ENCODE measurements at regions of chr2 and their contacts with region 1.

Region 1: GRCh38 chr2:179936654-179937053 is 70.4 kb downstream of the CWC22 start:
- DNase-seq: peak; percentile 57 to 77
- H3K4me3 ChIP-seq: no peak overlapping the region
- H3K4me3 Mint-ChIP-seq: no peak overlapping the region
- H3K27ac Mint-ChIP-seq: no peak overlapping the region
- H3K4me1 ChIP-seq: no peaks in the 10 kb centered on the region
- H3K4me1 Mint-ChIP-seq: no peaks in the 10 kb centered on the region
- H3K27me3 ChIP-seq: no peaks in the 10 kb centered on the region
- H3K27me3 Mint-ChIP-seq: no peaks in the 10 kb centered on the region
- CTCF ChIP-seq: peak; percentile 71

Region 2: GRCh38 chr2:179410552-179411356 is 525.9 kb before region 1 on chr2:
- CTCF ChIA-PET with region 1: no interaction called
- POLR2A ChIA-PET with region 1: no interaction called
- intact Hi-C with region 1: loop called (anchors 5 kb)
- DNase-seq: peak; percentile 54 to 68
- H3K4me3 ChIP-seq: no peak overlapping the region
- H3K4me3 Mint-ChIP-seq: no peak overlapping the region
- H3K27ac Mint-ChIP-seq: no peak overlapping the region
- H3K4me1 ChIP-seq: no peaks in the 10 kb centered on the region
- H3K4me1 Mint-ChIP-seq: no peaks in the 10 kb centered on the region
- H3K27me3 ChIP-seq: no peaks in the 10 kb centered on the region
- H3K27me3 Mint-ChIP-seq: no peaks in the 10 kb centered on the region
- CTCF ChIP-seq: peak; percentile 78 to 84

Region 3: DNA sequence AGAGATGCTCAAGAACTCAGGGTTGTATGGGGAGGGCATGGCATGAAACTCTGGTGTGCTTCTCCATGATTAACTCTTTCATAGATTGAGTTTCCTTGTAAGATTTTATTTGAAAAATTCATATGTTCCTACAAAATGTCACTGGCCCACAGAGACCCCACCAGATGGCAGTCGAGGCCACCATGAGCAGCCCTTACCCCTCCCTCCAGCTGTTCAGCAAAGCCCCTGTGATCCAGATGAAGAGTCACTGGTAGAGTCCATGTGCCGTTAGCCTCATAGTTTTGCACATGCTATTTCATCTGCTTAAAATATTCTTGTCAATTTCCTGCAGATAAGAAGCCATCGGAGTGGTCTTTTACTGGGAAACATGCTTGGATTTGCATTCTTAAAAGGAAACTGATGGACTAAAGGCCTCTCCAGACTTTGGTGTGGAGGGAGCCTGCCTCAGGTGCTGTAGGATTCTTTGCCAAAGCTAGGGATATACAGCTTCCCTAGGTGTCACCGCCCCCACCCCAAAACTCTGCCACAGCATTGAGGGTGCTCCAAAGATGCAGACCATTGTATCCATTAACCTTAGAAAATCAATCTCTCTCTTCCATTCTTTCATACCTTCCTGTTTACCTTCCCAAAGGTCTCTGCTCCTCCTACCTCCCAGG is 94.0 kb before region 1 on chr2:
- CTCF ChIA-PET with region 1: interaction called, 3 read pairs
- POLR2A ChIA-PET with region 1: no interaction called
- intact Hi-C with region 1: loop called (anchors 1 kb)
- DNase-seq: peak; percentile 52 to 60
- H3K4me3 ChIP-seq: no peak overlapping the region
- H3K4me3 Mint-ChIP-seq: no peak overlapping the region
- H3K27ac Mint-ChIP-seq: no peak overlapping the region
- H3K4me1 ChIP-seq: no peaks in the 10 kb centered on the region
- H3K4me1 Mint-ChIP-seq: no peaks in the 10 kb centered on the region
- H3K27me3 ChIP-seq: no peaks in the 10 kb centered on the region
- H3K27me3 Mint-ChIP-seq: peaks cover 9% of the 10 kb centered on the region
- CTCF ChIP-seq: peak; percentile 69 to 76

Region 4: DNA sequence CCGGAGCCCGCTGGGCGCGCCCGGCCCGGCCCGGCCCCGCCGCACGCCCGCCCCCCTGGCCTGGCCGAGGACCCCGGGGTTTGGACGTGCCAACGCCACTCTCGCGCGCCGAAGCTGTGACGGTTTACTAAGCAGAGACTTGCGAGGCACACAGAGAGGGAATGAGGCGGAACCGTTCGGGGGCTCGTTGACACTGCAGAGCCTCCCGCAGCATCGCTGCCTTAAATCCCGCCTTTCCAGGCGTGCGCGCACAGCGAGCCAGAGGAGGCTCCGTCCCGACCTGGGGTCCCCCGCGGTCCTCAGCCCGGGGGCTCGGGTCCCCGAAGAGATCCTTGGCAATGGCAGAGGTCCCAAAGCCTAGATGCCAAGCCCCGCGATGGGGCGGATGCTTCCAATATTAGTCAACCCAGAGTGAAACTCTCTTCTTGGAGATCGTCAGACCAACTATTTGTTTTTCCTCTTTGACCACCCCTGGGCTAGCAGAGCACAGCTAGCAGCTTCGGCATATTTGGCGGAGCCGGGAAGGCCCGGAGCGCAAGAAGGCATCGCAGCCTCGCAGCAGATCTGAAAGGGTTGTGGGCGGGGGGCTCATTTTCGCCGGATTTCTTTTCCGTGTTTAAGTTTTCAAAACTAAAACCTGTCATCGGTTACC is 75.1 kb before region 1 on chr2 and contains the start of gene ZNF385B:
- CTCF ChIA-PET with region 1: no interaction called
- POLR2A ChIA-PET with region 1: no interaction called
- intact Hi-C with region 1: loop called (anchors 5 kb)
- DNase-seq: peak in 1 of 2 experiments; percentile 7
- H3K4me3 ChIP-seq: peak within 1 kb of the TSS; percentile 38
- H3K4me3 Mint-ChIP-seq: peak within 1 kb of the TSS; percentile 49
- H3K27ac Mint-ChIP-seq: no peak within 1 kb of the TSS
- H3K4me1 ChIP-seq: no peaks in the 10 kb centered on the region
- H3K4me1 Mint-ChIP-seq: peaks cover 5% of the 10 kb centered on the region
- H3K27me3 ChIP-seq: peaks cover 5% of the 10 kb centered on the region; the same call in 1 of the 2 replicates
- H3K27me3 Mint-ChIP-seq: peaks cover 43% of the 10 kb centered on the region
- CTCF ChIP-seq: no peak
- total RNA-seq, gene ZNF385B: 0.77 and 0.95 TPM in 2 replicates

Region 5: DNA sequence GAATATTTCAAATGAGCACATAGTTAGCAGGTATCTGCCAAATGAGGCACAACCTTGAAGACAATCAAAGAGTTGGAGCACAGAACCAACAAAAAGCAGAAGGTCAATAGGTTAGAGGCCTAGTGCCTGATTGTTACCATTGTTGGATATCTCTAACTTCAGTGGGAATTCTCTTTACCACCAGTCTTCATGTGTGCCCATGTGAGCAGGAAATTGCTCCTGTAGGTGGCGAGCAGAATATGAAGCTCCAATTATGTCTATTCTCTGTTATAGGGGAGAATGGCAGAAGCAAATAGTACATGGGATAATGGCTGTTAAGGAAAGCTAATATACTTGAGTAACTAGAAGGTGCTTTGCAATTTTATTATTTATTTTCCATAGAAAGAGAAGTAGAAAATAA is 60.4 kb before region 1 on chr2:
- CTCF ChIA-PET with region 1: no interaction called
- POLR2A ChIA-PET with region 1: no interaction called
- intact Hi-C with region 1: no loop called
- DNase-seq: no peak
- H3K4me3 ChIP-seq: no peak overlapping the region
- H3K4me3 Mint-ChIP-seq: no peak overlapping the region
- H3K27ac Mint-ChIP-seq: no peak overlapping the region
- H3K4me1 ChIP-seq: no peaks in the 10 kb centered on the region
- H3K4me1 Mint-ChIP-seq: no peaks in the 10 kb centered on the region
- H3K27me3 ChIP-seq: no peaks in the 10 kb centered on the region
- H3K27me3 Mint-ChIP-seq: peaks cover 13% of the 10 kb centered on the region
- CTCF ChIP-seq: peak in 1 of 2 experiments; percentile 34

Measured in Caco-2 (cell line).